B cell (primary cell): ENCODE measurements at regions of chr17 and their contacts with region 1.

Region 1: GRCh38 chr17:45135192-45135977 is at the start of gene ACBD4:
- DNase-seq: peak; percentile 98
- ATAC-seq: peak; percentile 83
- H3K4me3 ChIP-seq: peak within 1 kb of the TSS; percentile 35 to 96 (median 90)
- H3K4me3 Mint-ChIP-seq: peak within 1 kb of the TSS; percentile 95
- H3K27ac ChIP-seq: peak within 1 kb of the TSS; percentile 54 to 76
- H3K27ac Mint-ChIP-seq: peak within 1 kb of the TSS; percentile 87
- H3K4me1 ChIP-seq: peaks cover 17 to 24% of the 10 kb centered on the region in 2 donors
- H3K4me1 Mint-ChIP-seq: peaks cover 20% of the 10 kb centered on the region
- H3K27me3 ChIP-seq: peaks cover 0 to 10% (median 0%) of the 10 kb centered on the region in 4 experiments
- H3K27me3 Mint-ChIP-seq: peaks cover 4% of the 10 kb centered on the region
- CTCF ChIP-seq: peak; percentile 100
- total RNA-seq, gene ACBD4: 39.4 and 43.6 TPM in 2 replicates

Region 2: GRCh38 chr17:45050481-45051059 is 84.8 kb before region 1 on chr17:
- CTCF ChIA-PET with region 1: no interaction called
- POLR2A ChIA-PET with region 1: no interaction called
- intact Hi-C with region 1: no loop called
- DNase-seq: no peak
- ATAC-seq: no peak
- H3K4me3 ChIP-seq: peak overlapping the region; percentile 55 to 83 (median 73)
- H3K4me3 Mint-ChIP-seq: peak overlapping the region; percentile 89
- H3K27ac ChIP-seq: peak overlapping the region; percentile 77 to 92
- H3K27ac Mint-ChIP-seq: peak overlapping the region; percentile 90
- H3K4me1 ChIP-seq: peaks cover 7 to 19% of the 10 kb centered on the region in 2 donors
- H3K4me1 Mint-ChIP-seq: peaks cover 20% of the 10 kb centered on the region
- H3K27me3 ChIP-seq: no peaks in the 10 kb centered on the region
- H3K27me3 Mint-ChIP-seq: no peaks in the 10 kb centered on the region
- CTCF ChIP-seq: no peak

Region 3: DNA sequence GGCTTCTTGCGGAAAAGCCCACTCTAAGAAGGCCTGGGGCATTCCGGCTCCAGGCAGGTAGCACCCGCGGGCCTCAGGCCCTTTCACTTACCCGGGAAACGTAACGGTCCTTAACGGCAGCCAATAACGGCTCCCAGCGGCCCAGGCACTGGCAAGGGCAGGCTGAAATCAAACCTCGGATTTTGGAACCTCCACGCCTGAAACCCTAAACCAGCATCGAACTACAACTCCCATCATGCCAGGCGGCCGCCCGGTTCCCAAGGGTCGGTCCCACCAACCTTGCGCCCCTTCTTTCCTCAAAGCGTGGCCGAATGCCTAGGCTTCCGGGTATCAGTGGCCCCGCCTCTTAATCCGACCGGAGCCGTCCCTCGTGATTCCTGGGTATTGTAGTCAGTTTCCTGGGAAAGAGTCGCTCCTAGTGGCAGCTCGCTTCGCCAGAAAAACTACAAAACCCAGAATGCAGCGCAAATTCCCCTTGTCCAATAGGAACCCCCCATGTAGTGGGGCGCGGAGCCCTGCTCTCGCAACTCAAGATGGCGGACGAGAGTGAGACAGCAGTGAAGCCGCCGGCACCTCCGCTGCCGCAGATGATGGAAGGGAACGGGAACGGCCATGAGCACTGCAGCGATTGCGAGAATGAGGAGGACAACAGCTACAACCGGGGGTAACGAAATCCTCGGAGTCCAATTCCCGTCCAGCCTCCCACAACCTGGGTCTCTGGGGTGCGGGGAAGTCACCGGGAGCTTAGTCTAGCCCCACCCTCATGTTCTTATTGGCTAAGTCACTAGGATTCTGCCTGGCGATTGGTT is 74.4 kb before region 1 on chr17 and contains the start of gene NMT1:
- CTCF ChIA-PET with region 1: interaction called, 6 read pairs
- POLR2A ChIA-PET with region 1: interaction called, 3 read pairs
- intact Hi-C with region 1: loop called (anchors 2 kb)
- DNase-seq: peak; percentile 100
- ATAC-seq: peak; percentile 87
- H3K4me3 ChIP-seq: peak within 1 kb of the TSS; percentile 62 to 98 (median 96)
- H3K4me3 Mint-ChIP-seq: peak within 1 kb of the TSS; percentile 99
- H3K27ac ChIP-seq: peak within 1 kb of the TSS; percentile 75 to 89
- H3K27ac Mint-ChIP-seq: peak within 1 kb of the TSS; percentile 100
- H3K4me1 ChIP-seq: peaks cover 29 to 42% of the 10 kb centered on the region in 2 donors
- H3K4me1 Mint-ChIP-seq: peaks cover 40% of the 10 kb centered on the region
- H3K27me3 ChIP-seq: no peaks in the 10 kb centered on the region
- H3K27me3 Mint-ChIP-seq: no peaks in the 10 kb centered on the region
- CTCF ChIP-seq: no peak
- total RNA-seq, gene NMT1: 123 and 134 TPM in 2 replicates

Region 4: DNA sequence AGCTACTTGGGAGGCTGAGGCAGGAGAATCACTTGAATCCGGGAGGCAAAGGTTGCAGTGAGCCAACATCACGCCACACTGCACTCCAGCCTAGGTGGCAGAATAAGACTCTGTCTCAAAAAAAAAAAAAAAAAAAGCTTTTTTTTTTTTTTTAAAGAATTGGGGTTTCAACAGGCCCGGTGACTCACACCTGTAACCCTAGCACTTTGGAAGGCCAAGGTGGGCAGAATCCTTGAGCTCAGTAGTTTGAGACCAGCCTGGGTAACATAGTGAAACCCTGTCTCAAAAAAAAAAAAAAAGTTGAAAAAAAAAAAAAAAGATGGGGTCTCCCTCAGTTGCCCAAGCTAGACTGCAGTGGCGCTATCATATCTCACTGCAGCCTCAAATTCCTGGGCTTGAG is 19.6 kb after region 1 on chr17:
- CTCF ChIA-PET with region 1: interaction called, 242 read pairs
- POLR2A ChIA-PET with region 1: interaction called, 36 read pairs
- intact Hi-C with region 1: loop called (anchors 1 kb)
- DNase-seq: no peak
- ATAC-seq: no peak
- H3K4me3 ChIP-seq: no peak overlapping the region
- H3K4me3 Mint-ChIP-seq: no peak overlapping the region
- H3K27ac ChIP-seq: peak overlapping the region in 1 of 2 donors; percentile 60
- H3K27ac Mint-ChIP-seq: no peak overlapping the region
- H3K4me1 ChIP-seq: peaks cover 39 to 40% of the 10 kb centered on the region in 2 donors
- H3K4me1 Mint-ChIP-seq: peaks cover 49% of the 10 kb centered on the region
- H3K27me3 ChIP-seq: no peaks in the 10 kb centered on the region
- H3K27me3 Mint-ChIP-seq: no peaks in the 10 kb centered on the region
- CTCF ChIP-seq: no peak

Region 5: DNA sequence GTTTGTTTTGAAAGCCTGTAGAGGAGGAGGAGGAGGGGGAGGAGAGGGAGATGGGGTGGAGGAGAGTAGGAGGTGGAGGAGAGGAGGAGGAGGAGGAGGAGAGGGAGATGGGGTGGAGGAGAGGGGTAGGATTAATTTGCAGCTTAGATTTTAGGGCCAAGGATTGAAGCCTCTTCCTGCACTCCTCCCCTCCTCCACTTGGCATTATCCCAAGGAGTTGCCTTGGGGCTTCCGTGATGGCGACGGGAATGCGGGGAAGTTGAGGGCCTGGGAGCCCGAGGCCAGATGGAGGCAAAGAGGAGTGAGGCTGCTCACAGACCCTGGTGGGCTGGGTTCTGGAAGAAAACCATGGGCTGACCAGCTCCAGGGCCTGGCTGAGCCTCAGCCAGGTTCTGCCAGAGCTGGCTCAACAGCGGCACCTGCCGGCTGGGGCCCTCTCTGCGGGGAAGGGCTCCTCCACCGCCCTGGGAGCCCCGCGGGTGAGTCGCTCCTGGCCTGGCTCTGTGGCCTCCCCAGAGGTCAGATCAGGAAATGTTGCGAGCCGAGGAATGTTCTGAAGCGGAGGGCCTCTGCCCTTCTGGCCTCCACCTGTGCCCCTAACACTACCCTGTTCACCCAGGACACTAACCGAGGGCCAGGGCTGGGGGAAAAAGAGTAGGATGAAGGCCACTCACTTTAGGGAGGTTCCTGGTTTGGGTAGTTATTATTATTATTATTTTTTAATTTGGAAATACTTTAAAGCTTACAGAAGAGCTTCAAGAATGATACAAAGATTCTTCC is 62.4 kb after region 1 on chr17:
- CTCF ChIA-PET with region 1: interaction called, 233 read pairs
- POLR2A ChIA-PET with region 1: interaction called, 7 read pairs
- intact Hi-C with region 1: loop called (anchors 1 kb)
- DNase-seq: peak; percentile 87
- ATAC-seq: peak; percentile 100
- H3K4me3 ChIP-seq: no peak overlapping the region
- H3K4me3 Mint-ChIP-seq: no peak overlapping the region
- H3K27ac ChIP-seq: no peak overlapping the region
- H3K27ac Mint-ChIP-seq: peak overlapping the region; percentile 15
- H3K4me1 ChIP-seq: peaks cover 0 to 6% of the 10 kb centered on the region in 2 donors
- H3K4me1 Mint-ChIP-seq: peaks cover 9% of the 10 kb centered on the region
- H3K27me3 ChIP-seq: no peaks in the 10 kb centered on the region
- H3K27me3 Mint-ChIP-seq: no peaks in the 10 kb centered on the region
- CTCF ChIP-seq: peak; percentile 97

Region 6: GRCh38 chr17:45235416-45236281 is 100.3 kb after region 1 on chr17:
- CTCF ChIA-PET with region 1: interaction called, 14 read pairs
- POLR2A ChIA-PET with region 1: no interaction called
- intact Hi-C with region 1: no loop called
- DNase-seq: peak; percentile 87
- ATAC-seq: peak; percentile 56
- H3K4me3 ChIP-seq: no peak overlapping the region
- H3K4me3 Mint-ChIP-seq: no peak overlapping the region
- H3K27ac ChIP-seq: peak overlapping the region; percentile 0 to 43
- H3K27ac Mint-ChIP-seq: peak overlapping the region; percentile 82
- H3K4me1 ChIP-seq: peaks cover 18 to 45% of the 10 kb centered on the region in 2 donors
- H3K4me1 Mint-ChIP-seq: peaks cover 47% of the 10 kb centered on the region
- H3K27me3 ChIP-seq: no peaks in the 10 kb centered on the region
- H3K27me3 Mint-ChIP-seq: no peaks in the 10 kb centered on the region
- CTCF ChIP-seq: peak; percentile 83